ENCODE measurements at regions of chr6 and their contacts with region 1.

Region 1: DNA sequence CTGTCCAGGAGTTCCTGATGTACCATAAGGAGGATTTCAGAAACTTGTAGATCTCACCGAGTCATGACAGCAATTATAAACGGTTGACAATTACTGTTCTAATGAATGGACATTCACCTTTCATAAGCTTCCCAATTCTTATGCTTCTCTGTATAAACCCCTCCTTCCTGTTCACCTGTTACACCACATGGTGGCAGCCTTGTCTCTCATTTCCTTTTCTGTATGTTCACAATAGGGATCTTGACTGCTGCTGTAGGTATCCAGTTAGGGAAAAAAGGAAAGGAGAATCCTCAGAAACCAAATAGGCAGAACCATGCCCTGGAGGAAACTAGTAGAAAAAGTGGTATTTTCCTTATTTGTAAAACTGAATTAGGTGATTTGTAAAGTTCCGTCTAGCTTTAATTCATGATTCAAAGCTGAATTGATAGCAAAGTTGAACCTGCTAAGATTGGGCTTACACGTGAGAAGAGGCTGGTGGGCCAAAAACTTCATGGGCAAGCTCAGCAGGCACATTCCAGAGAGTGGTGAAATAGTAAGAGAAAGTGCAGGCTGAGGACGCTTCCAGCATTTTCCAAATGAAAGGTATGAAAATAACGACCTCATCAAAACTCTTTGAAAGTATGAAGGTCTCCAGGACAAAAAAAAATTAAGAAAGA is 29.0 kb upstream of the TBPL1 start:
- DNase-seq: peak in 4 of 5 donors; percentile 45 to 60 (median 54)
- ATAC-seq: peak; percentile 80 to 95 (median 92)
- H3K4me3 ChIP-seq: no peak overlapping the region
- H3K27ac ChIP-seq: no peak overlapping the region
- H3K4me1 ChIP-seq: peaks cover 0 to 2% (median 0%) of the 10 kb centered on the region in 12 donors
- H3K27me3 ChIP-seq: peaks cover 0 to 9% (median 0%) of the 10 kb centered on the region in 9 donors
- CTCF ChIP-seq: peak; percentile 74 to 93 (median 84)
- POLR2A ChIP-seq: no peak

Region 2: GRCh38 chr6:132530293-132530974 is 1393.6 kb before region 1 on chr6:
- intact Hi-C with region 1: loop called in 3 of 10 experiments (anchors 5 to 10 kb)
- DNase-seq: peak in 4 of 5 donors; percentile 26 to 58 (median 46)
- ATAC-seq: peak in 3 of 4 donors; percentile 44 to 72 (median 71)
- H3K4me3 ChIP-seq: no peak overlapping the region
- H3K27ac ChIP-seq: no peak overlapping the region
- H3K4me1 ChIP-seq: no peaks in the 10 kb centered on the region
- H3K27me3 ChIP-seq: peaks cover 0 to 10% (median 0%) of the 10 kb centered on the region in 9 donors
- CTCF ChIP-seq: peak; percentile 74 to 96 (median 86)
- POLR2A ChIP-seq: no peak

Region 3: GRCh38 chr6:133871131-133871530 is 52.9 kb before region 1 on chr6:
- intact Hi-C with region 1: no loop called
- DNase-seq: no peak
- ATAC-seq: no peak
- H3K4me3 ChIP-seq: no peak overlapping the region
- H3K27ac ChIP-seq: no peak overlapping the region
- H3K4me1 ChIP-seq: no peaks in the 10 kb centered on the region
- H3K27me3 ChIP-seq: peaks cover 0 to 8% (median 0%) of the 10 kb centered on the region in 9 donors
- CTCF ChIP-seq: no peak
- POLR2A ChIP-seq: no peak

Region 4: GRCh38 chr6:133945158-133945557 is 21.1 kb after region 1 on chr6:
- intact Hi-C with region 1: loop called in 1 of 10 experiments (anchors 1 kb)
- DNase-seq: no peak
- ATAC-seq: no peak
- H3K4me3 ChIP-seq: no peak overlapping the region
- H3K27ac ChIP-seq: no peak overlapping the region
- H3K4me1 ChIP-seq: no peaks in the 10 kb centered on the region
- H3K27me3 ChIP-seq: no peaks in the 10 kb centered on the region
- CTCF ChIP-seq: no peak
- POLR2A ChIP-seq: no peak

Region 5: DNA sequence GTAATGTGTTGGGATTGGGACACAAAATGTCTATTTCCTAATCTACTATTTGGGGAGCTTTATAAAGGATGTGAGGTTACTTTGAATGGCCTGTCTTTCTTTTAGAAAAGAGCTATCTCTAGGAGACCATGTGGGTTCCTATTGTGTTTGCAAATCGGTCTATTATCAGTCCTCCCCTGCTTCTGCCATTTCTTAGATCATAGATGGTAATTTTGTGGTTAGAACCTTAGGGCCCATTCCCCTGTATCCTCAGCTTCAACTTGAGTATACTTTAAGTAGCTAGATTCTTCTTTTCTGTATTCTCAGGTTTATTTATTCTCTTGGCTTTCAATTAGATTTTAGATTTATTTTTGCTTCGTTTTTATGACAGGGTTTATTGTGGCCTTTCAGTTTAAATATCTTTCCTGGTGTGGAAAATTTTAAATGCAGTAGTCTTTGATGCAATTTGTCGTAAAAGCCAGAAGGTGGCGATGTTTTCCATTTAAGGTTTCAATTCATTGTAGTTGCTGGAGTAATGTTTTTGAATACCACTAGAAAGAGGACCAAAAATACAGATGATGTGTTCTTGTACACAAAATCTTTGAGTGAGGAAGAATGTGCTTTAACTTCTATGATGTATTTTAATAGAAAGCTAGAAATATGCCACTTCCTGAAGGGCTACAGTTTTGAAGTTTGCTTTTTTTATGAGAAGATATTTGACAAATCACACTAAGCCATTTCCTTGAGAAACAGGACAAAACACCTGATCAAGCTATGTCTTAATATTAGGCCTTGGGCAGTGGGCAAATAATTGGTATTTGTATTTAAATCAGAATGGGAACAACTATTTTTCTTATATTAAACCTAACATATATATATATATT is 49.3 kb after region 1 on chr6:
- intact Hi-C with region 1: loop called in 6 of 10 experiments (anchors 2 to 10 kb)
- DNase-seq: no peak
- ATAC-seq: peak in 1 of 4 donors; percentile 41
- H3K4me3 ChIP-seq: no peak overlapping the region
- H3K27ac ChIP-seq: no peak overlapping the region
- H3K4me1 ChIP-seq: peaks cover 0 to 28% (median 18%) of the 10 kb centered on the region in 12 donors
- H3K27me3 ChIP-seq: no peaks in the 10 kb centered on the region
- CTCF ChIP-seq: peak; percentile 61 to 84 (median 74)
- POLR2A ChIP-seq: no peak

Region 6: GRCh38 chr6:134063966-134064445 is 139.9 kb after region 1 on chr6:
- intact Hi-C with region 1: loop called in 9 of 10 experiments (anchors 1 to 10 kb)
- DNase-seq: peak in 4 of 5 donors; percentile 44 to 54 (median 48)
- ATAC-seq: peak; percentile 72 to 91 (median 86)
- H3K4me3 ChIP-seq: no peak overlapping the region
- H3K27ac ChIP-seq: peak overlapping the region in 1 of 12 donors; percentile 63
- H3K4me1 ChIP-seq: peaks cover 0 to 28% (median 5%) of the 10 kb centered on the region in 12 donors
- H3K27me3 ChIP-seq: no peaks in the 10 kb centered on the region
- CTCF ChIP-seq: peak; percentile 58 to 91 (median 72)
- POLR2A ChIP-seq: no peak

Region 7: GRCh38 chr6:134097114-134097707 is 173.1 kb after region 1 on chr6:
- intact Hi-C with region 1: loop called (anchors 1 to 2 kb)
- DNase-seq: peak in 4 of 5 donors; percentile 39 to 62 (median 50)
- ATAC-seq: peak in 2 of 4 donors; percentile 50 to 56
- H3K4me3 ChIP-seq: no peak overlapping the region
- H3K27ac ChIP-seq: no peak overlapping the region
- H3K4me1 ChIP-seq: no peaks in the 10 kb centered on the region
- H3K27me3 ChIP-seq: peaks cover 0 to 3% (median 0%) of the 10 kb centered on the region in 9 donors
- CTCF ChIP-seq: peak; percentile 41 to 76 (median 68)
- POLR2A ChIP-seq: no peak

Region 8: GRCh38 chr6:134544737-134545136 is 620.7 kb after region 1 on chr6:
- intact Hi-C with region 1: no loop called
- DNase-seq: no peak
- ATAC-seq: no peak
- H3K4me3 ChIP-seq: no peak overlapping the region
- H3K27ac ChIP-seq: peak overlapping the region in 1 of 12 donors; percentile 48
- H3K4me1 ChIP-seq: peaks cover 0 to 26% (median 6%) of the 10 kb centered on the region in 12 donors
- H3K27me3 ChIP-seq: no peaks in the 10 kb centered on the region
- CTCF ChIP-seq: no peak
- POLR2A ChIP-seq: no peak